ENCODE measurements at regions of chr3 and their contacts with region 1.

Region 1: GRCh38 chr3:173395412-173396181 is 1.9 kb upstream of the NLGN1 start:
- DNase-seq: peak; percentile 77
- ATAC-seq: peak; percentile 81
- H3K4me3 Mint-ChIP-seq: peak overlapping the region; percentile 67
- H3K27ac Mint-ChIP-seq: no peak overlapping the region
- H3K4me1 Mint-ChIP-seq: peaks cover 31% of the 10 kb centered on the region
- H3K27me3 Mint-ChIP-seq: peaks cover 57% of the 10 kb centered on the region

Region 2: GRCh38 chr3:173109143-173109542 is 286.5 kb before region 1 on chr3:
- CTCF ChIA-PET with region 1: no interaction called
- POLR2A ChIA-PET with region 1: no interaction called
- intact Hi-C with region 1: no loop called
- DNase-seq: no peak
- ATAC-seq: no peak
- H3K4me3 Mint-ChIP-seq: no peak overlapping the region
- H3K27ac Mint-ChIP-seq: no peak overlapping the region
- H3K4me1 Mint-ChIP-seq: no peaks in the 10 kb centered on the region
- H3K27me3 Mint-ChIP-seq: no peaks in the 10 kb centered on the region

Region 3: GRCh38 chr3:173371848-173372487 is 23.6 kb before region 1 on chr3:
- CTCF ChIA-PET with region 1: no interaction called
- POLR2A ChIA-PET with region 1: no interaction called
- intact Hi-C with region 1: no loop called
- DNase-seq: peak; percentile 11
- ATAC-seq: no peak
- H3K4me3 Mint-ChIP-seq: no peak overlapping the region
- H3K27ac Mint-ChIP-seq: no peak overlapping the region
- H3K4me1 Mint-ChIP-seq: no peaks in the 10 kb centered on the region
- H3K27me3 Mint-ChIP-seq: no peaks in the 10 kb centered on the region

Region 4: DNA sequence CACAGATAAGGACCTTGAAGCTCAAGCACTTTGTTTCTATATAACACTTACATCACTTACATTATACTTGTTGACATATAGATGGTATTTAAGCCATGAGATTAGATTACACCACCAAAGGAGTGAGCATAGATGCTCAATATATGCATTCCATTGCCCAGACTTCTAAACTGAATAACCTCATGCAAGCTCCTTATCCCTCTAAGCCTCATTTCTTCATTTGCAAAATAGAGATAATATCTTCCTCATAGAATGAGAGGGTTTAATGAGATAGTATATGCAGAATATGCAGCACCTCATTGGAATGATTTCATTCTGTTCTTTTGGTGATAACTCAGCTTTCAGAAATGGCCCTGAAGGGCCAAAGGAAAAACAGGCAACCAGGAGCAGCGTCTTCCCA is 20.5 kb after region 1 on chr3:
- CTCF ChIA-PET with region 1: no interaction called
- POLR2A ChIA-PET with region 1: no interaction called
- intact Hi-C with region 1: no loop called
- DNase-seq: no peak
- ATAC-seq: no peak
- H3K4me3 Mint-ChIP-seq: no peak overlapping the region
- H3K27ac Mint-ChIP-seq: no peak overlapping the region
- H3K4me1 Mint-ChIP-seq: no peaks in the 10 kb centered on the region
- H3K27me3 Mint-ChIP-seq: no peaks in the 10 kb centered on the region

Region 5: GRCh38 chr3:173584093-173584837 is 188.7 kb after region 1 on chr3:
- CTCF ChIA-PET with region 1: no interaction called
- POLR2A ChIA-PET with region 1: no interaction called
- intact Hi-C with region 1: loop called (anchors 5 kb)
- DNase-seq: no peak
- ATAC-seq: no peak
- H3K4me3 Mint-ChIP-seq: no peak overlapping the region
- H3K27ac Mint-ChIP-seq: no peak overlapping the region
- H3K4me1 Mint-ChIP-seq: peaks cover 11% of the 10 kb centered on the region
- H3K27me3 Mint-ChIP-seq: peaks cover 18% of the 10 kb centered on the region

Region 6: GRCh38 chr3:174251681-174252080 is 856.1 kb after region 1 on chr3:
- CTCF ChIA-PET with region 1: no interaction called
- POLR2A ChIA-PET with region 1: no interaction called
- intact Hi-C with region 1: no loop called
- DNase-seq: no peak
- ATAC-seq: no peak
- H3K4me3 Mint-ChIP-seq: no peak overlapping the region
- H3K27ac Mint-ChIP-seq: no peak overlapping the region
- H3K4me1 Mint-ChIP-seq: no peaks in the 10 kb centered on the region
- H3K27me3 Mint-ChIP-seq: peaks cover 2% of the 10 kb centered on the region

Measured in activated CD4-positive, alpha-beta T cell treated with anti-CD3 and anti-CD28 coated beads for 36 hours (primary cell).